ENCODE measurements at regions of chr2 and their contacts with region 1.

Region 1: DNA sequence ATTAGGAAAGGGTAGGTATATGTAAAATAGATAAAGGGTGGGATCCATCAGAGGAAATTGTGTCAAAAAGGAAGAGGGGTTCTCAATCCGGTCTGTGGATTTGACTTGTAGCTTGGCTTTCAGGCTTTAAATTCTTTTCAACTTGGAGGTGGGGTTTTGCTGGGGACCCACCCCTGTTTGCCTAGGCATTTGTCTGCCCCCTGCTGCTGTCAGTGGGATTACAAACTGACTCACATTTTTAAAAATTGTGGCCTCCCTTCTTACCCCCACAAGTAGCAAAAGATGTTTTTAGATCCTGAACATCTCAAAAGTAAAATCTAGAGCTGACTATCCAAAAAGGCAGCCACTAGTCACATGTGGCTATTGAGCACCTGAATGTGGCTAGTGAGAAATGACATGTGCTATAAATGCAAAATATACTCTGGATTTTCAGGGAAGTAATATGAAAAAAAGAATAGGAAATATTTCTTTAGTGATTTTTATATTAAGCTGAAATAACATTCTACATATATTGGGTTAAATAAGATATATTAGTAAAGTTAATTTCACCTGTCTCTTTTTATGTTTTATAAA is 178.9 kb downstream of the GFPT1 start:
- DNase-seq: no peak
- H3K4me3 ChIP-seq: no peak overlapping the region
- CTCF ChIP-seq: no peak

Region 2: GRCh38 chr2:68925295-68925896 is 282.7 kb before region 1 on chr2:
- CTCF ChIA-PET with region 1: no interaction called
- POLR2A ChIA-PET with region 1: no interaction called
- DNase-seq: no peak
- H3K4me3 ChIP-seq: no peak overlapping the region
- CTCF ChIP-seq: peak; percentile 72

Region 3: GRCh38 chr2:69192176-69192945 is 15.7 kb before region 1 on chr2:
- CTCF ChIA-PET with region 1: interaction called, 13 read pairs
- POLR2A ChIA-PET with region 1: no interaction called
- DNase-seq: peak; percentile 59
- H3K4me3 ChIP-seq: no peak overlapping the region
- CTCF ChIP-seq: no peak

Region 4: DNA sequence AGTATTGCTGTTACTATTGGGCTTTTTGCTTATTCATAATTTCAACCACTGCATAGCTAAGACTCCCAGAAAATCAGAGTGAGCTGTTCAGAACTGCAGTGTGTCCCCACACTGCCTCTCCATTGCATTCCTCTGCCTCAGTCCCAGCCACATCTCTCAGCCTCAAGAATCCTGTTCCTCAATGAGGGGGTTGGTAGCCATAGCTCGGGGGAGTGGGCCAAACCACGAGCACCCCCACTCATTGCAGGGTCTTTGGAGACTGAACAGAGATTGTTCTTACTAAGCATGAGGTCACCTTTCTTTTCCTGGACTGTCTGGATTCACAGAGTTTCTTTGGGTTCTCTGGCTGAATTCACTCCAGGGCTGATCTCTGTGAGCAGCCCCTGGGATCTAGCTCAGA is 17.8 kb after region 1 on chr2:
- CTCF ChIA-PET with region 1: interaction called, 14 read pairs
- POLR2A ChIA-PET with region 1: interaction called, 6 read pairs
- DNase-seq: no peak
- H3K4me3 ChIP-seq: no peak overlapping the region
- CTCF ChIP-seq: no peak

Measured in AG04449 (cell line).